GM13976 (cell line): ENCODE measurements at regions of chr16 and their contacts with region 1.

Region 1: GRCh38 chr16:57648590-57649442 is 19.3 kb upstream of the ADGRG3 start:
- DNase-seq: peak; percentile 94
- CTCF ChIP-seq: peak; percentile 100

Region 2: GRCh38 chr16:57596234-57596887 is 52.5 kb before region 1 on chr16:
- in situ Hi-C with region 1: loop called (anchors 5 kb)
- DNase-seq: no peak
- CTCF ChIP-seq: no peak